ENCODE measurements at regions of chr16 and their contacts with region 1.

Region 1: DNA sequence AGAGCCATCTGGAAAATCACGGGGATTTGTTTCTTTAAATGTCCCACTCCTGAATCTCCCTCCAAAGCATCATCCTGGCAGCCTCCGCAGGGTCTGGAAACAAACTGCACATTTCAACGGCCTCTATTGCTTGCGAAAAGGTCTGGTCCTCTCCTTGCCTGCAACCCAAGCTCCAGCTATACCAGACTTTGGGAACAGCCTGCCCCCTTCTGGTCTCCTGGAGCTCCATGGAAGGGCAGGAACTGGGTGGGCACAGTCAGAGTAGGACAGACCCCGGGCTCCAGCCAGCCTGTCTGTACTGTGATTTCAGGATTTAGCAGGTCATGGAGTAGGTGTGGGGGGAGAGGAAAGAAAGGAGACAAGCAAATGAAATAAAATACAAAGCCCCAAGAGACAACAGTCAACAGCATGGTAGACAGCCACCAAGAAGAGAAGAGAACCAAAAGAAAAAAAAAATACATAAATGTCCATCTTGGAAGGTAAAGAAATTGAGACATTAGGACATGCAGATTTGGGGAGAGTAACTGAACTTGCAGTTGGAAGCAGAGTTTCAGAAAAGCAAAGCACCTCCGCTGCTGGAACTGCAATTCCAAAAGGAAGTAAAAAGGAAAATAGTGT is 2.7 kb downstream of the XYLT1 start:
- DNase-seq: peak; percentile 66
- H3K4me3 ChIP-seq: peak overlapping the region in 1 of 2 donors; percentile 50
- H3K27ac ChIP-seq: no peak overlapping the region
- H3K4me1 ChIP-seq: no peaks in the 10 kb centered on the region
- H3K27me3 ChIP-seq: no peaks in the 10 kb centered on the region
- CTCF ChIP-seq: peak; percentile 34 to 78 (median 74)
- POLR2A ChIP-seq: no peak

Region 2: DNA sequence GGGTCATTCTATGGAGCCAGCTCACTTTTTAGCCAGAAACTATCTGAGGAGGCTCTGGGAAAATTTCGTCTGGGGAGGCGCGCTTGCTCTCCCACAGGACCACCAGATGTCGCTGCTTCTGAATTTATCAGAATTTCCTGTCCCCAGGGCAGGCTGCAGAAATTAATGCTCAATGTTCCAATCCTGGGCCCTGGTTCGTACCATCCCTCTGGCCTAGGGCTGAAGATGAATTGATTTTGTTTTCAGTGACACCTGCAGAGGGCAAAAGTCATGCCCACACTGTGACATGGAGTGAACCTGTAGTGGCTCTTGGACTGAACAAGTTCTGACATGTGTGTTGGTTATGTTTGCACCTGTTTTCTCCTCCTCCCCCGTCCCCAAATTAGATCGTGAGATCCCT is 606.5 kb before region 1 on chr16:
- intact Hi-C with region 1: loop called (anchors 10 kb)
- DNase-seq: peak; percentile 49
- H3K4me3 ChIP-seq: no peak overlapping the region
- H3K27ac ChIP-seq: no peak overlapping the region
- H3K4me1 ChIP-seq: no peaks in the 10 kb centered on the region
- H3K27me3 ChIP-seq: peaks cover 3% of the 10 kb centered on the region
- CTCF ChIP-seq: peak; percentile 52 to 68 (median 63)
- POLR2A ChIP-seq: no peak

Region 3: GRCh38 chr16:17134586-17134985 is 333.4 kb before region 1 on chr16:
- intact Hi-C with region 1: no loop called
- DNase-seq: no peak
- H3K4me3 ChIP-seq: no peak overlapping the region
- H3K27ac ChIP-seq: no peak overlapping the region
- H3K4me1 ChIP-seq: no peaks in the 10 kb centered on the region
- H3K27me3 ChIP-seq: no peaks in the 10 kb centered on the region
- CTCF ChIP-seq: no peak
- POLR2A ChIP-seq: no peak

Region 4: DNA sequence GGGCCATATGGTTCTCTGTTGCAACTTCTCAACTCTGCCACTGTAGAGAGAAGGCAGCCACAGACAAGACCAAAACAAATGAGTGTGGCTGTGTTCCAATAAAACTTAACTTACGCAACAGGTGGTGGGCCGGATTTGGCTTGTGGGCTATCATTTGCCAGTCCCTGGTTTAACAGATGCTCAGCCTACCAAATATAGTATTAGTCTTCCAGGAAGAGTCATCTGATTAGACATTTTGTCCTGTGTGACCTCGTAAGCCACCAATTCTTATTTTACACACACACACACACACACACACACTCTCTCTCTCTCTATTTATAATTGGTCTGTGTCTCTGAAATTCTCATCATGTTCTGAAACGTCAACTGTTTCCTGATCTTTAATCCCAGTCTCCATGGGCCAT is 243.2 kb before region 1 on chr16:
- intact Hi-C with region 1: loop called (anchors 5 kb)
- DNase-seq: peak; percentile 69
- H3K4me3 ChIP-seq: no peak overlapping the region
- H3K27ac ChIP-seq: peak overlapping the region; percentile 3 to 15
- H3K4me1 ChIP-seq: no peaks in the 10 kb centered on the region
- H3K27me3 ChIP-seq: no peaks in the 10 kb centered on the region
- CTCF ChIP-seq: peak in 1 of 4 experiments; percentile 5
- POLR2A ChIP-seq: no peak

Region 5: GRCh38 chr16:17277977-17278381 is 190.1 kb before region 1 on chr16:
- intact Hi-C with region 1: loop called (anchors 5 kb)
- DNase-seq: peak; percentile 53
- H3K4me3 ChIP-seq: no peak overlapping the region
- H3K27ac ChIP-seq: no peak overlapping the region
- H3K4me1 ChIP-seq: peaks cover 3% of the 10 kb centered on the region
- H3K27me3 ChIP-seq: no peaks in the 10 kb centered on the region
- CTCF ChIP-seq: peak in 3 of 4 experiments; percentile 55 to 61 (median 57)
- POLR2A ChIP-seq: no peak

Region 6: GRCh38 chr16:17301593-17302135 is 166.4 kb before region 1 on chr16:
- intact Hi-C with region 1: loop called (anchors 10 kb)
- DNase-seq: no peak
- H3K4me3 ChIP-seq: no peak overlapping the region
- H3K27ac ChIP-seq: no peak overlapping the region
- H3K4me1 ChIP-seq: peaks cover 19% of the 10 kb centered on the region
- H3K27me3 ChIP-seq: no peaks in the 10 kb centered on the region
- CTCF ChIP-seq: no peak
- POLR2A ChIP-seq: no peak

Region 7: DNA sequence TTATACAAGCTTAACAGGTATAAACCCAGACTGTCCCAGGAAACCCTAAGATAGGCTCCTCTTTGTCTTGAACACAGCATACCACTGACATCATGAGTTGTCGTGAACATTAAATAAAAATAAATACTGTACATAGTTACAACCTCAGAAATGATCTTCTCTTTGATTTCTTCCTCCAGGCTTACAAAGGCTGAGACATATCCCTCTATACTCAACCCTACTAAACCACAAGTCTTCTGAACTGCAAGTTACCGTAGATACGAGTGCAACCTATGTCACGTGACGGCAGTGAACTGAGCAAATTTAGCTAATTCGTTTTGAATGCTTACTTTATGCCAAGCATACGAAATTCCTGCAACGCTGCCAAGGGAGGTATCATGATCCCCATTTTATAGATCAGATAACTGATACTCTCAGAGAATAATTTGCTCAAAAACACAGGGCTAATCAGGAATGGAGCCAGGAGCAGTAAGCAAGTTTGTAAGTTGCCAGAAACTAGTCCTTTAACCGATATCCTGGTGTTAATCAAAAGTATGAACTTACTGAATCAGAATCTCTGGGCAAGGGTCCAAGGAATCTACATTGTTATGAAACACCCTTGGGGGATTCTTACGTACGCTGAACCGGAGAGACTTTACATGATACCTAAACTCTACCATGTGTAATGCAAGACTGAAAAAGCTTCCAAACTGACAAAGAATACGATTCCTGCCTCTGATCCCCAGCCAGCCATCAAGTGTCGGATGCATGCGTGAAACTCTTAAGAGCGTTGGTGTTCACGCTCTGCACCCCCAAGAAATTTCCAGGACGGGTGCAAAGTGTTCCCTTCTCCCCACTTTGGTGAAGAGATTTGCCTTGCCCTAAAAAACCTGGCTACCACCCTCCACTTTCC is 103.5 kb before region 1 on chr16:
- intact Hi-C with region 1: loop called (anchors 5 kb)
- DNase-seq: peak; percentile 53
- H3K4me3 ChIP-seq: no peak overlapping the region
- H3K27ac ChIP-seq: no peak overlapping the region
- H3K4me1 ChIP-seq: no peaks in the 10 kb centered on the region
- H3K27me3 ChIP-seq: no peaks in the 10 kb centered on the region
- CTCF ChIP-seq: no peak
- POLR2A ChIP-seq: no peak

Region 8: DNA sequence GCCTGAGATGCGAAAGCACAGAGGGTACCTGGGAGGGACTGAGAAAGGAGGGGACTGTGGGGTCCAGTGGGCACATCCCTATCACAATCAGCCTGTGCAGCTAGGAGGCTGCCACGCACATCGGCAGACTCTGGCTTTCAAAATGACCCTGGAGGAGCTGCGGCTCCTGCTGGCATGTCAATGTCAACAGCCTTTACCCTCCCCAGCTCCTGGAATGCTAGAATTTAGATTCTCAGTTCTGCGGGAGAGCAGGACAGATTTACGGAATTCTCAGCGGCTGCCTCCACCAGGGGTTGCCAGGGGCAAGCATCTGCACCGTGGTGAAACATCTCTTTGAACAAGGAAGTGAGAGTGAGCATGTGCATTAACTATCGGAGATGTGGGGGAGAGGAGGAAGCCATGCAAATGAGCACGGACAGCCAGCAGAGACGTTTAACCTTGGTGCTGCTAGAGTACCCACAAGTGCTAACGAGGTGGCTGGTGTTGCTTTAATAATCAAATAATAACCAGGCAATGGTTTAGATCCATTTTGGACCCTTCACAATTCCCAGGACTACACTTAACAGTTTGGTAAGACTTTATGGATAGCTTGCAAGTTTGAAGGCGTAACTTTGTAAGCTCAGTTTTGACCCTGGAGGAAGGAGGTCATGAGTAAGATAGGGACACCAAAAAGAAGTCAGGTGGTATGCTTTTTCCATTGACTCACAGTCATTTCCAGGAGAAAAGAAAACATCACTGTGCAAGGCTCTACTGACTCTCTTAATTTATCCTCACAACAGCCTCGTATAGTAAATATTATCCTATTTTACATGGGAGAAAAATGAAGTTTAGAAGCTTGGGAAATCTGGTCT is 51.3 kb before region 1 on chr16:
- intact Hi-C with region 1: loop called (anchors 5 kb)
- DNase-seq: no peak
- H3K4me3 ChIP-seq: no peak overlapping the region
- H3K27ac ChIP-seq: no peak overlapping the region
- H3K4me1 ChIP-seq: no peaks in the 10 kb centered on the region
- H3K27me3 ChIP-seq: no peaks in the 10 kb centered on the region
- CTCF ChIP-seq: peak in 1 of 4 experiments; percentile 29
- POLR2A ChIP-seq: no peak